GM18951 (cell line): ENCODE measurements at regions of chr20 and their contacts with region 1.

Region 1: DNA sequence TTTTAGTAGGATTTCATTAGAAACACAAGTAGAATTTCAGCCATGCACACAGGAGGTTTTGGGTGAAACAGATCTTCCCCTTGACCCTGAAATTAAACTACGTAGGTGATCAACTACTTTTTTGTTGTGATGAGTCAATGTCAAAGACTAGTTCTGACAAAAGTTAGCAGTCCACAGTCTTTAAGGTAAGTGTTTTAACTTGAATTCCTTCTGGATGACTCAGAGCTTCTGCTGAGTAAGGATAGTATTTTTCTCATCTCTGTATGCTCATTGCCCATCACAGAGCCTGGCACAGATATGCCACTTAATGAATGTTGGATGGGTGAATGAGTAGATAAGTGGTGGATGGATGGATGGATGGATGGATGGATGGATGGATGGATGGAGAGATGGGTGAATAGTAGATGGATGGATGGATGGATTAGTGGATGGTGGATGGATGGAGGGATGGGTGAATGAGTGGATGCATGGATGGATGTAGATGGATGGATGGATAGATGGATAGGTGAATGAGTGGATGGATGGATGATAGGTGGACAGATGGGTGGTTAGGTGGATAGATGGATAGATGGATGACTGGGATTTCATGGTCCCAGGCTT is 165.3 kb downstream of the ZMYND8 start:
- POLR2A ChIP-seq: no peak

Region 2: DNA sequence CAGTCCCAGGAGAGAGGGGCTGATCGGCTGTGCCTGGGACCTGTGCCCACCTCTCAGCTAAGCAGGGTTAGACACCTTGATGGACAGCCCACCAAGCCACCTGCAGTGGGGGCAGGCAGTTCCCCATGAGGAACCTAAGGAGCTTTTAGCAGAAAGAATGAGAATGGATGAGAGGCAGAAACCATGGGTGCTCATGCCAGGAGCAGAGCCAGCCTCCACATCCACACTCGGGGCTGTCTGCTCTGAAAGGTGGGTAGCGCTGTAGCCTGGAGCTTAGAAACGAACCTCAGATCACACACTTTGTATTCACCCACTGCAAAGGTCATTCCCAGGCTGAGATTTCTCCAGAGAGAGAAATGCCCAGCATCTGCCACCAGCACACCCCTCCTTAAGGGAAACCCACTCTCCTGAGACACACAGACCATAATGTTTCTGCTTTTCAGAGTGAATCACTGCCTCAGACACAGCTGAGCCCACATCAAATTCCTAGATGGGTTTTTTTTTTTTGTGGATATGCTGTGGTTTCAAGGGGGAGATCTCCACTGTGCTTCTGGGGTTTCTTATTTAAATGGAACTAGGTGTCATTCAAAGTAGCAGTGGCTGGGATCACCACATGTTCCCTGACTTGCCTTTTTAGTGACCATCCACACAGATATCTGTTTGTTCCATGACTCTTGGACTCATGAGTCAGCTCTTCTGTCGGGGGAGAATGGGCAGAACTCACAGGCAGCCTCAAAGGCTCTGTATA is 77.6 kb before region 1 on chr20:
- in situ Hi-C with region 1: no loop called
- POLR2A ChIP-seq: no peak

Region 3: DNA sequence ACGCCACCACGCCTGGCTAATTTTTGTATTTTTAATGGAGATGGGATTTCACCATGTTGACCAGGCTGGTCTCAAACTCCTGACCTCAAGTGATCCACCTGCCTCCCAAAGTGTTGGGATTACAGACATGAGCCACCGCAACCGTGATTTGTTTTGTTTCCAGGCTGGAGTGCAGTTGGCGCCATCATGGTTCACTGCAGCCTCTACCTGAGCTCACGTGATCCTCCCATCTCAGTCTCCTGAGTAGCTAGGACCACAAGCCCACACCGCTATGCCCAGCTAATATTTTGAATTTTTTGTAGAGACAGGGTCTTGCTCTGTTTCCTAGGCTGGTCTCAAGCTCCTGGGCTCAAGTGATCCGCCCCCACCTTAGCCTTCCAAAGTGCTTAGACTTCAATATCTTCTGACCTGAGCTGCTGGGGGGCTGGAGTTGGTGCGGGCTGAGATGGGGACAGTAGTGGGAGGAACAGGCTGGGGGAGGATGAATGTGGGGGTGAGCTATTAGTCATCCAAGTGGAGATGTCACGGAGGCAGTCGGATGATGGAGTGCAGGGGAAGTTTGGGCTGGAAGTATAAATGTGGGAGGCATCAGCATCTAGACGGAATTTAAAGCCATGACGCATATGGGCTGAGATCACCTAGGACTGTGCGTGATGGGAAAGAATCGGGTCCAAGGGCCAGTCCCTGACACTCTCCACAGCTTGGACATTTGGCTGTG is 188.4 kb after region 1 on chr20:
- in situ Hi-C with region 1: loop called (anchors 5 kb)
- POLR2A ChIP-seq: no peak